Cardiac septum (tissue), 1 donor: ENCODE measurements at regions of chr3 and their contacts with region 1.

Region 1: DNA sequence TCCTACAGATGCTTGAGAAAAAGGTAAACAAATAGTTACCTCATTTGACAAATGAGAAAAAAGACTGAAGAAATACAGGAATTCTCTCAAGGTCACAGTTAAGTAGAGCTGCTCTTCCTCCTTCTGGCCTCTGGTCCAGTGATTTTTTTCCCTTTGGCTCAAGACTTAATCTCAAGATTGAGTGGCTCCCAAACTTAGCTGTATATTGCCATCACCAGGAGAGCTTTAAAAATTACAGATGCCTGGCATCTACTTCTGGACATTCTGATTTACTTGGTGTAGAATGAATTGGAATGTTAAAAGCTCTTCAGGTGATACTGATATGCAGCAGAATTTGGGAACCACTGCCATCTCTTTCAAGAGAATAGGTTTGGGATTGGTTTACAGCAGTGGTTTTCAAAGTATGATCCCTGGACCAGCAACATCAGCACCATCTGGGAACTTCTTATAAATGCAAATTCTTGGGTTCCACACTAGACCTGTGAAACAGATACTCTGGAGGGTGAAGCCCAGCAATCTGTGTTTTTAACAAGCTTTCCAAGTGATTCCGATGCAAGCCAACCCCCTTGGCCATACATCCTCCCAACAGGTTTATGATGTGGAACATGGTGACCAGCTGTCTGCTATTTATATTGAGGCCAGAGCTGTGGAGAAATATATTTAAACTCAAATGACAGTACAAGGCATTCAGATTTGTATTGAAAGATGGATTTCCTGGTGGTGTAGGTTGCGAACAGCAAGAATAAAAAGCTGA is 333.0 kb upstream of the RARB start:
- DNase-seq: no peak

Region 2: GRCh38 chr3:24773798-24774197 is 321.3 kb before region 1 on chr3:
- intact Hi-C with region 1: loop called (anchors 10 kb)
- DNase-seq: no peak

Region 3: DNA sequence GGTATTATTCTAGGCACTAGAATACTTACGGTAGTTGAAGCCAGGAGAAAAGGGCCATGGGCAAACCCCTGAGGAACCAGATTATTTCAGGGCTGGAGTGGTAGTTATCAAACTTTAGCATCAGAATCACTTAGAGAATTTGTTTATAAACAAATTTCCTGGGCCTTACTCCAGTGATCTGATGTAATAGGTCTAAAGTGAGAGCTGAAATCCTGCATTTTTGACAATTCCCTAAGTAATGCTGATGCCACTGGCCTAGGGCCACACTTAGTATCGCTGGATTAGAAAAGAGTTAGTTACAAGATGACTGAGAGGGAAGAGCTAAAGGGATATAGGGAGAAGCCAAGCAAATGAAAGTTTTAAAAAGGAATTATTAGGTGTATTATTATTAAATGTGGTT is 188.0 kb before region 1 on chr3:
- intact Hi-C with region 1: no loop called
- DNase-seq: no peak

Region 4: DNA sequence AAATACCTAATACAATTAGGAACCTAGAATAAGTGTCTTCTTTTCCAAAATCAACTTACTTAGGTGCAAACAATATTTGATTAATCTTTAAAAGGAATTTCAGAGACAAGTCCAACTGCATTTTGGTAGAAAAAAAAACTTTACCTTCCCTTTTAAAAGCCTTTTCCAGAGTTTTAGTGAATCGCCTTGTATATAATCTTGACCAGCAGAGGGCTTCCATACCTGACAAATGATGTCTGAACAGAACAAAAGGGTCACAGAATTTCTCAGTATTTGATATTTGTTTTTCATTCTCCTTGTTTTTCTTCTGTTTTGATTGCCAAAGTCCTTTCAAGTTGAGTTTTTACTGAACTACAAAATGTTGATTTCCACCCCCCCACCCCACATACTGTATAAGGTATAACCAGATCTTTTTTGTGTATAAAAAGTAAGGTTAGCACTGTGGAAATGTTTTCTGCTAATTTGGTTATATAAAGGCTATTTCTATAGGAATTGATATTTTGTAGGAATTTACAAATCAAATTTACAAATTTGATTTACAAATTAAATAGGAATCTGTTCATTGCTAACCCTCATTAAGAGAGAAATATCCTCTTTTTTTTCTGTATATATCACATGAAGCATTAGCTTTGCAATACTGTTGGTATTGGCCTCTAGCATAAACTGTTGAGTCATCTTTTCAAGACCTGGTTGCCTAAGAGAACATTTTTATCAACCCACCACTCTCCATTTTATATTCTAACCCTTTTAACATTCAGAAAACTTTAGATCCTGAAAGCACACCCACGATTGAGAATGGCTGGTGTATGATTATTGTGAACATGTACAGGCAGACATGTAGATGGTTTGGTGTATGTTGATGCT is 131.1 kb before region 1 on chr3:
- intact Hi-C with region 1: loop called (anchors 5 kb)
- DNase-seq: no peak

Region 5: DNA sequence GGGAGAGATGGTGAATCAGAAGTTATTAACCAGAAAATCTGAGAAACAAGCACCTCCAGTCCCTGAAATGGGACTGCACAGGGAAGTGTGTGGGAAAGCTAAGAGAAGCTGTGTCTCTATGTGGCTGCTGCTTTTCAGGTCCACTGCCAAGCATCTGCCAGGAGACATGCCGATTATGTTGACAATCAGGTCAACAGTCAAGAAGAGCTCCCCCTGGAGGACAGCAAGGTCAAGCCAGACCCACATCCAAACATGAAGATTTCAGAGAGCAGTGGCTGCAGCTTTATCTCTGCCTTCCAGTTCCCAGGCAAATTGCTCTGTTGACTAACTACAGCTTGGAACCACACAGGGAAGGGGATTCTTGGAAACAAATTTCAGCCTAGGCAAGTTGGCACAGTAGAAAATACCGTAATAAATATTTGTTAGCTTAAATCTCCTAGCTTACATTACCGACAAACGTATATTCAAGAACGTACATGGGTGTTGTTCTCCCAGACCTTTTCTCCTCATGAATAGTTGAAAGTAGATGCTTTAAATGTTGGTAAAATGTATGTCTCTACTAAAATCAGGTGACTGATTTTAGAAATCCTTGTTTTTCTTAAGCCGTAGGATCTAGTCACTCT is 61.6 kb before region 1 on chr3:
- intact Hi-C with region 1: loop called (anchors 5 kb)
- DNase-seq: no peak

Region 6: DNA sequence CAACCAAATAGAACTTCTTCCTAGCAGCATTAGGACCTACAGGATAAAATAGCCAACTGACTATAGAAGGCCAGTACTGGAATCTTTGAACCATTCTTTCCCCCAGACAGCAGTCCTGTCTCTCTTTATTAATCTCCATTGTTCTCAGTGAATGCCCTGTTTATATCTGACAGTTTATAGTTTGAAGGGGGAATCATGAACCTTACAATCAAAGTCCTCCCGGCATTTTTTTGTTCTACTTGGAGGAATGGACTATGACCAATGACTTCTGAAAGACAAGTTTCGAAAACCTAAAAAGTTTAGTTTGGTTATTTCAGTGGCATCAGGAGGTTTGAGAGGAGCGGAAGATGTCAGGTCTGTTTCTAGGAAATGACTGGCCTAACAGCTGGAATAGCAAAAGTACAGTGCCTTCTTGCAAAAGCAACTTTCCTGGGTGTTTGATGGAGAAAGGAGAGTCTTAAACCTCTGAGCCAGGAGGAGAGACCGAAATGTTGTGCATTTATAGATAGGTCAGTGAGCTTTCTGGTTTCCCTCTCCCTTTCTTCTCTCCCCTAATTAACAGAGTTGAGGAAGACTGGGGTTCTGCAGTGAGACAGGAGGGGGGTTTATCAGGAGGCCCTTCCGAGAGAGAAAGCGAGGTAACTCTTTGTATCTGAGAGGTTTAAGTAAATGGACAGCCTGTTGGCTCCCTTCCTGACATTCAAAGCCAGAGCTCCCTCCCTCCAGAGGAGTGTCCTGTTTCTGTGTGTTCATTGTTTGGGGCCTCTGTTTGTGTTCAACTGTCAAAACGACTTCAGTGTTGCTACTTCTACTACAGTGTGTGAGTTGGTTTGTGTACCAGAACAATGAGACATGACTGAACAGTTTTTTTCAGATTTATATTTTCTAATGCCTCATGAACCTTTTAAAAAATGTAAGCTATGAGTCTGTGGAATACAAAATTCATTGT is 50.1 kb before region 1 on chr3:
- intact Hi-C with region 1: no loop called
- DNase-seq: no peak

Region 7: DNA sequence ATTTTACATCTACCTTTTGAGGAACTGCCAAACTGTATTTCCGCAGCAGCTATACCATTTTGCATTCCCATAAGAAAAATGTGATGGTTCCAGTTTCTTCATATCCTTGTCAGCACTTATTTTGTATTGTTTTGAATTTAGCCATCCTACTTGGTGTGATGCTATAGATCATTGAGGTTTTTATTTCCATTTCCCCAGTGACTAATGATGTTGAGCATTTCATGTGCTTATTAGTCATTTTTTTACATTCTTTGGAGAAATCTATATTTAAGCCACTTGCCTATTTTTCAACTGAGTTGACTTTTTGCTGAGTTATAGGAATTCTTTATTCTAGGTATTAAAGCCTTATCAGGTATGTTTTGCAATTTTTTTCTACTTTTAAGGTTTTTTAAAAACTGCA is 14.6 kb before region 1 on chr3:
- intact Hi-C with region 1: no loop called
- DNase-seq: no peak